ENCODE measurements at regions of chr6 and their contacts with region 1.

Region 1: GRCh38 chr6:27672113-27672799 is 199.4 kb upstream of the ZNF184 start:
- DNase-seq: peak; percentile 97
- ATAC-seq: peak; percentile 84
- H3K4me3 ChIP-seq: peak overlapping the region; percentile 63 to 86
- H3K27ac ChIP-seq: peak overlapping the region; percentile 63
- H3K4me1 ChIP-seq: peaks cover 8% of the 10 kb centered on the region; the same call in 1 of the 2 replicates
- H3K27me3 ChIP-seq: no peaks in the 10 kb centered on the region
- CTCF ChIP-seq: no peak

Region 2: GRCh38 chr6:27617700-27618689 is 54.3 kb before region 1 on chr6:
- CTCF ChIA-PET with region 1: no interaction called
- POLR2A ChIA-PET with region 1: interaction called, 3 read pairs
- in situ Hi-C with region 1: no loop called
- intact Hi-C with region 1: loop called (anchors 5 kb)
- DNase-seq: no peak
- ATAC-seq: peak; percentile 92
- H3K4me3 ChIP-seq: peak overlapping the region; percentile 71 to 84
- H3K27ac ChIP-seq: peak overlapping the region; percentile 45; the same call in 1 of the 2 replicates
- H3K4me1 ChIP-seq: 0 out of 2 replicates have a peak, but pooled peaks cover 3% of the 10 kb centered on the region
- H3K27me3 ChIP-seq: 0 out of 2 replicates have a peak, but pooled peaks cover 2% of the 10 kb centered on the region
- CTCF ChIP-seq: peak; percentile 37; the same call in 1 of the 2 replicates

Region 3: DNA sequence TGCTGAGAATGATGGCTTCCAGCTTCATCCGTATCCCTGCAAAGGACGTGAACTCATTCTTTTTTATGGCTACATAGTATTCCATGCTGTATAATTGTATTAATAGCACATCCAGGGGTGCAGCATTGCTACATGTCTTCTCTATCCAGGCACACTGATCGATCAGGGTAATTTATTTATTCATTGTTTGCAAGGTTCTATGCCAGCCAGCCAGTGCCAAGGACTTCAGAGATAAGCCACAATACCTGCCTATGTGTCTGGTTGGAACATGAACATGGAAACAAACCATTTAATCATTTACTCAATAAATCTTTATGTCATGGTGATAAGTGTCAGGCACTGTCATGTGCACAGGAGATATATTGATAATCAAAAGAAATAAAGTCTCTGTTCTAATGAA is 1420.7 kb after region 1 on chr6:
- CTCF ChIA-PET with region 1: no interaction called
- POLR2A ChIA-PET with region 1: no interaction called
- in situ Hi-C with region 1: no loop called
- intact Hi-C with region 1: no loop called
- DNase-seq: no peak
- ATAC-seq: no peak
- H3K4me3 ChIP-seq: no peak overlapping the region
- H3K27ac ChIP-seq: no peak overlapping the region
- H3K4me1 ChIP-seq: no peaks in the 10 kb centered on the region
- H3K27me3 ChIP-seq: no peaks in the 10 kb centered on the region
- CTCF ChIP-seq: no peak

Measured in Panc1 (cell line).